ENCODE measurements at regions of chr3 and their contacts with region 1.

Region 1: DNA sequence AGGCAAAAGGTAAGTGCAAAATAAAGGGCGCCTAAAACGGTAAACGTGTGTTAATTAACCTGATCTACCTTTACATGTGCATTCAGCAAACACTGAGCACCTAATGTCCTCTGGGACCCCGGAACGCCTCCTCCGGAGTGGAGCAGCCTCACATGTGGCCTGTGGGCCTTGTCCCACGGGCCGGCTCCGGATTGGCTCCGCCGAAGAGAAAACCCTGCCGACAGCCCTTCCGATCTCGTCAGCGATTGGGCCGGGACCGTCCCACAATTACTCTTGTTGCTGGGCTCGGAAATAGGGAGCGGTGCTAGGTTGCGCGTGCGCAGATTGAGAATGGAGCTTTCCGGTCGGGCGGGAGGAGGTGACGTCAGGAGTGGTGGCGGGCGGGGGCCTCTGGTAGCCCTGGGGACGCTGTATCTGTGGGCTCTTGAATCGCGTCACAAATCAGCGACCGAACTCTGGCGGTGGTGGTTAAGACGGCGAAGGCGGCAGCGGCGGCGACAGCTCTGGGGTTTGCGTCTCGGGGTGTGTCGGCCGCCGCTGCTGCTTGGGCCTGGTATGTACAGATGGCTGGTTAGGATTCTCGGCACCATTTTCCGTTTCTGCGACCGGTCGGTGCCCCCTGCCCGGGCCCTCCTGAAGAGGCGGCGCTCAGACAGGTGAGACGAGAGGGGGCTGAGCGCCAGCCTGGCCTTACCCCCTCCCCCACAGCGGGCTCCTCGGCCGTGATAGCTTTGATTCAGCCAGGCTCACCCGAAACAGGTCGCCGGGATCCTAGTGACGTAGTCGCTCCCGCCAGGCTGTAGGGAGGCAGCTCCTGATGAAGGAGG is at the start of gene SENP2:
- DNase-seq: peak; percentile 100
- H3K4me3 Mint-ChIP-seq: peak within 1 kb of the TSS; percentile 83
- H3K27ac Mint-ChIP-seq: peak within 1 kb of the TSS; percentile 88
- H3K4me1 Mint-ChIP-seq: peaks cover 27% of the 10 kb centered on the region
- H3K27me3 Mint-ChIP-seq: no peaks in the 10 kb centered on the region
- total RNA-seq, gene SENP2: 19.4 to 25.0 TPM

Region 2: DNA sequence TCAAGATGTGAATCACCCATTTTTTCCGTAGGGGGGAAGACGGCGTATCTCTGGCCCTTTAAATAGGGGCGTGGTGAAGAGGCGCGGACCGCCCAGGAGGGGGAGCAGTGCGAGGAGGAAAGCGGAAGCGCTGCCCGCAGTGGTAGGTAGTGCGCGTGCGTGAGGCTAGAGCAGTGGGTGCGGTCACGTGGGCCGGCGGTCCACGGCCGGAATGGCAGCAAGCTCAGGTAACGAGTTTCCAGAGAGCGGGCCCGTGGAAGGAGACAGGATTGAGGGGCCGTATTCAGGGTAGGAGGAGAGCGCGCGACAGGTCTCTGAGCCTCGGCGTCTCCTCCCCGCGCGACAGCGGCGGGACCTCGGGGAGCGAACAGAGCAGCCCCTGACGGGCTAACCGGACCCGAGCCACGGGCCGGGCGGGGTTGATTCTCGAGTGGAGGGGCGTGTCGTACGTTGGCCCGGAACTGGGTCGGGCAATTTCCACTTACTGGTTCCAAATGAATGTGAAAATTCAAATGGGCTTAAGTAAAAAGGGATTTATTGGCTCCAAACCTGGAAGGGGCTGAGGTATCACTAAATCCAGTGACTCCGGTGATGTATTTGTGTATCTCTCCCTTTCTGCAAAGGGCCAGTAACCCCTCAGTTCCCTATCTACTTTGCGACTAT is 773.9 kb before region 1 on chr3 and contains the start of gene VPS8:
- CTCF ChIA-PET with region 1: no interaction called
- intact Hi-C with region 1: loop called (anchors 1 kb)
- DNase-seq: peak; percentile 97
- H3K4me3 Mint-ChIP-seq: peak within 1 kb of the TSS; percentile 92
- H3K27ac Mint-ChIP-seq: peak within 1 kb of the TSS; percentile 85
- H3K4me1 Mint-ChIP-seq: peaks cover 48% of the 10 kb centered on the region
- H3K27me3 Mint-ChIP-seq: no peaks in the 10 kb centered on the region
- total RNA-seq, gene VPS8: 32.7 to 33.7 TPM

Region 3: GRCh38 chr3:185176750-185177359 is 409.2 kb before region 1 on chr3:
- CTCF ChIA-PET with region 1: no interaction called
- intact Hi-C with region 1: no loop called
- DNase-seq: peak; percentile 58
- H3K4me3 Mint-ChIP-seq: no peak overlapping the region
- H3K27ac Mint-ChIP-seq: no peak overlapping the region
- H3K4me1 Mint-ChIP-seq: no peaks in the 10 kb centered on the region
- H3K27me3 Mint-ChIP-seq: peaks cover 6% of the 10 kb centered on the region

Region 4: DNA sequence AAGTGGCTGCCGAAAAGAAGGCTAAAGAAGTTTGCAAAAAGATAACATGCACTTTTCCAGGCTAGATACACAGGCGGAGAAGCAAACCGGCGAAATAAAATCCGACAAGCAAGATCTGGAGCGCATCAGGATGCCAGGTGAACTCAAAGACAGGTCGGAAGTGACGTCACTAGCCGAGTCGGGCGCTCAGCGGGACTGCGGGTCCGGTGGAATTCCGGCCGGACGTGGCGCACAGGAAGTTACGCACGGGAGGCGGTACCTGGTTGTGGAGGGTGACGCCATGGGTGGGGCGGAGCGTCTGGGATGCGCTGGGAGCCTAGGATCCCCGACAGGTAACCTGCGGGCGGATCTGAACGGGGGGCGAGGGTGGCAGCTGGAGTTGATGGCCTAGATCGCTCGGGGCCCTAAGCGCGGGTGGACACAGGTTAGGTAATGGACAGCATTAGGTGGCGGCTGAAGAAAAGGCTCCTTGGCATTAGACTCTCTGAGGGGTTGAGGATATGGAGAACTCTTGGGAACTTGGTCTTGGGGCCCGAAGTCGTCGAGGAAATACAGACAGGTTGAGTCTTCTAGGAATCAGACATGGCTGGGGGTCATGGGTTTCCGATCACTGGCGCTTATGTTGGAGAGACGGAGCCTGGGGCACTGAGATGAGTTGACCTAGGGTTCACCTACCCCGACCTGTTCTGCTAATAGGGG is 303.2 kb before region 1 on chr3:
- CTCF ChIA-PET with region 1: no interaction called
- intact Hi-C with region 1: loop called (anchors 1 kb)
- DNase-seq: peak; percentile 98
- H3K4me3 Mint-ChIP-seq: peak overlapping the region; percentile 99
- H3K27ac Mint-ChIP-seq: peak overlapping the region; percentile 77
- H3K4me1 Mint-ChIP-seq: peaks cover 23% of the 10 kb centered on the region
- H3K27me3 Mint-ChIP-seq: peaks cover 18% of the 10 kb centered on the region

Region 5: DNA sequence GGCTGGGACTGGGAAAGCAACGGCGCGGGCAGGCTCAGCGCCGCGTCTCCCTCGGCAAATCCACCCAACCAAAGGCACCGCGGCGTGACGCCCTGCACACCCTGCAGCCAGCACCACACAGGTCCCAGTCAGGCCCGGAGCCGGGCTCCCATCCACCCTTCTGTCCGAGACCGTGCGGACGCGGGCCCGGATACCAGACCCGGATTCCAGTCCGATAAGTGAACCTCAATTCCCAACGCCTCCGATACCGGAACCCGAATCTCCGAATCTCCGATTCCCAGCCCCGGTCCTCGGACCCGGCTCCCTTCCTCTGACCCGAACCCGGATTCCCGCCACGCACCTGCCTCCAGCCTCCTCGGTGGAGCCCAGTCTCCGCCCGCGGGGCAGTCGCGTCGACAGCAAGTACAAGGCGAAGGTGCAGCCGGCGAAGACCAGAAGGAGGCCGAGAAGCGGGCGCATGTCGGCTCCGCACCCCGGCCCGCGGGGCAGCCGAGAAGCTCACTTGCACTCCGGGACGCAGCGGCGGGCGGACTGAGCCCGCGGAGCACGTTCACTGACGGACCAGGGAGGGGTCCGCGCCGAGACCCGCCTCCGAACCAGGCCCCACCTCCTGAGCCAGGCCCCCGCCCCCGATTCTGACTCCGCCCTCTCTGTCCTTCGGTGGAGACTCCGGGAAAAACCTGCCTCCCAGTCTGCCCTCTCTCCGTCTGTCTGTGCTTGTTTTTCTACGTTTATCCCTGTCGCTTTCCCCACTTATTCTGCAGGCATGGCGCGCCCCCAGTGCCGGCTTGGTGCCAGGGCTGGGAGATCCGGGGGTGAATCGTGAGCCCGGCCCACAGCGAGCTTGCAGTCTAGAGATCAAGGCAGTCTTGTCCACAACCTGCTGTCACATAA is 87.3 kb before region 1 on chr3 and contains the start of gene TMEM41A:
- CTCF ChIA-PET with region 1: no interaction called
- intact Hi-C with region 1: loop called (anchors 1 kb)
- DNase-seq: peak; percentile 94
- H3K4me3 Mint-ChIP-seq: peak within 1 kb of the TSS; percentile 89
- H3K27ac Mint-ChIP-seq: peak within 1 kb of the TSS; percentile 78
- H3K4me1 Mint-ChIP-seq: peaks cover 17% of the 10 kb centered on the region
- H3K27me3 Mint-ChIP-seq: no peaks in the 10 kb centered on the region
- total RNA-seq, gene TMEM41A: 13.1 to 14.6 TPM

Region 6: DNA sequence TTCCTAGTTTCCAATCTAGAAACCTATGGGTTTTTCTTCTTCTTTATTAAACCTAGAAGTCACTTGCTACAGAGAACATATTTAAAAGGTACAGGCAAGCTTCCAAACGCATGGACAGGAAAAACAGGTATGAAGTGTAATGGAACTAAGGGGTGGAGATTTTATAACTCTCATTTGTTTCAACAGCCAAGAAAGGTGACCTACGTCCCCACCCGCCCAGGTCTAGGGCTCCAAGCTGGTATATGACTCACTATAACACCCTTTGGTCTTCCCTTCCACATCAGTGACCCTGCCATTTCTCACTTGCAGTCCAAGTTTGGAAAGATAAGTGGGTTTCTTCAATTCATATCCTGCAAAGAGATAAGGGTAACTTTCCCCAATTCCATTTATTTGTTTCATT is 27.7 kb before region 1 on chr3:
- CTCF ChIA-PET with region 1: interaction called, 10 read pairs
- intact Hi-C with region 1: no loop called
- DNase-seq: no peak
- H3K4me3 Mint-ChIP-seq: no peak overlapping the region
- H3K27ac Mint-ChIP-seq: no peak overlapping the region
- H3K4me1 Mint-ChIP-seq: peaks cover 13% of the 10 kb centered on the region
- H3K27me3 Mint-ChIP-seq: peaks cover 2% of the 10 kb centered on the region

Region 7: DNA sequence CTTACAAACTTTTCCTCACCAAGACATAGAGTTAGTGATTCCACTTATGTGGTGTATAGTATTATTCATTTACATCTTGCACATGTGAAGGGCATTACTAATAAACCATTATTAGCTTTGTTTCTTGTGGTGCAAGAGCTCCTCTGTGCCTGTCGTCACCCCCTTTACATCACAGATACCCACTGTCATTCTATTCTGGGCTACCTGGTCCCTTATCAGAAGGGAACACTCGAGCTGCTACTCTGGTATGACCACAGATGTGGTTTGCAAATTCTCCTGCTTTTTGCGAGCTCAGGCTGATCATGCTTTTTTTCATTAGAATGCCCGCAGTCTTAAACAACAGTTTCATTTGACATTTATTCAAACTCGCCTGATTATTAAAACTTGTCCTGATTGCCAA is 13.9 kb before region 1 on chr3:
- CTCF ChIA-PET with region 1: interaction called, 20 read pairs
- intact Hi-C with region 1: no loop called
- DNase-seq: no peak
- H3K4me3 Mint-ChIP-seq: no peak overlapping the region
- H3K27ac Mint-ChIP-seq: no peak overlapping the region
- H3K4me1 Mint-ChIP-seq: peaks cover 2% of the 10 kb centered on the region
- H3K27me3 Mint-ChIP-seq: no peaks in the 10 kb centered on the region

Region 8: GRCh38 chr3:185937689-185938463 is 351.8 kb after region 1 on chr3 and contains the start of gene TRA2B:
- CTCF ChIA-PET with region 1: no interaction called
- intact Hi-C with region 1: loop called (anchors 1 kb)
- DNase-seq: peak; percentile 99
- H3K4me3 Mint-ChIP-seq: peak within 1 kb of the TSS; percentile 100
- H3K27ac Mint-ChIP-seq: peak within 1 kb of the TSS; percentile 100
- H3K4me1 Mint-ChIP-seq: peaks cover 20% of the 10 kb centered on the region
- H3K27me3 Mint-ChIP-seq: no peaks in the 10 kb centered on the region
- total RNA-seq, gene TRA2B: 172 to 176 TPM